ENCODE measurements at regions of chr12 and their contacts with region 1.

Region 1: DNA sequence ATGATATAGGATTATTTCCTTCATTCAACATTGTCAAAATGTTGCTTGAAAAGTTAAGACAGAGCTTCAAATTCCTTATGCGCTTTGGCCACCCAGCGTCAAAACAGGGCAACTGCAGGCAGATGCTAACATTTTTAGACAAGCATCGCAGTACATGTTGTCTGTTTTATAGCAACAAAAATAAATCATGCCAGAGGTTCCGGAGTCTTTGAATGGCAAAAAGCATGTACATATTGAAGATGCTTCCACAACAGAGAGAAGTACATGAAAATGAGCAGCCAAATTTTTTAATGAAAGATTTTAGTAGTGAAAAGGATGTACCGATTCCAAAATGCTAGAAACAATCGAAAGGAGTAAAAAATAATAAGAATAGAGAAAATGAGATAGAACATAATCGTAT is 49.8 kb upstream of the USP15 start:
- DNase-seq: peak; percentile 59
- ATAC-seq: no peak
- H3K4me3 Mint-ChIP-seq: no peak overlapping the region
- H3K27ac Mint-ChIP-seq: no peak overlapping the region
- H3K4me1 Mint-ChIP-seq: peaks cover 11% of the 10 kb centered on the region
- H3K27me3 Mint-ChIP-seq: no peaks in the 10 kb centered on the region

Region 2: DNA sequence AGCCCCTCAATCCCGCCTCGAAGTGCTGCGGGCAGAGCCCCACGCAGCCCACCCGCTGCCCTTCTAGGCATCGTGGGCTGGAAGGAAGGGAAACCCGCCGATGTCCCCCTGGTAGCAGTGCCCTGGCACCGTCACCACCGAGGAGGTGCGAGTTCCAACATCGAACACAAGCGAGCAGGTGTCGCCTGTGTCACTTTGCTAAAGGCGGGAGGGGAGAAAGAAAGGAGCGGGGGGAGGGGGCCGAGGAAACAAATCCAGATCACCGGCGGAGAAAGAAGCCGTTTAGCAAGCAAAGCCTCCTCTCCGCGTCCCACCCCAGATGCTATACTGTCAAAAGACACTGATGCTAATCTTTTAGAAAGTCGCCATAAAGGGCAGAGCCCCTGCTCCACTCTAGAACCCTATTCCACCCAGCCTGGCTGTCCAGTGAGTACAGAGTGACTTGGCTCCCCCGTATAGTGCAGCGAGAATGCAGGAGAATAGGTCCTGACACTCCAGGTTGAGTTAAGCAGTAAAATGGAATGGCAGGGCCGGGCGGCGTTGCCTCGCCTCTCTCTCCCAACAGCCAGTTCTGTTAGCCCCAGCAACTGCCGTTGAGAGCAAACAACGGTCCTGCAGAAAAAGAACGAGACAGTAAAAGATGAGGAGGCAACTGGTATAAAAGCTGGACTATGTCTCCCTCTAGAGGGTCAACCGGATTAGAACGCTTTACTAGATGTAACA is 18.1 kb before region 1 on chr12:
- CTCF ChIA-PET with region 1: interaction called, 14 read pairs
- POLR2A ChIA-PET with region 1: no interaction called
- DNase-seq: peak; percentile 71
- ATAC-seq: peak; percentile 86
- H3K4me3 Mint-ChIP-seq: peak overlapping the region; percentile 76
- H3K27ac Mint-ChIP-seq: peak overlapping the region; percentile 34
- H3K4me1 Mint-ChIP-seq: peaks cover 28% of the 10 kb centered on the region
- H3K27me3 Mint-ChIP-seq: peaks cover 51% of the 10 kb centered on the region